ENCODE measurements at regions of chr22 and their contacts with region 1.

Region 1: DNA sequence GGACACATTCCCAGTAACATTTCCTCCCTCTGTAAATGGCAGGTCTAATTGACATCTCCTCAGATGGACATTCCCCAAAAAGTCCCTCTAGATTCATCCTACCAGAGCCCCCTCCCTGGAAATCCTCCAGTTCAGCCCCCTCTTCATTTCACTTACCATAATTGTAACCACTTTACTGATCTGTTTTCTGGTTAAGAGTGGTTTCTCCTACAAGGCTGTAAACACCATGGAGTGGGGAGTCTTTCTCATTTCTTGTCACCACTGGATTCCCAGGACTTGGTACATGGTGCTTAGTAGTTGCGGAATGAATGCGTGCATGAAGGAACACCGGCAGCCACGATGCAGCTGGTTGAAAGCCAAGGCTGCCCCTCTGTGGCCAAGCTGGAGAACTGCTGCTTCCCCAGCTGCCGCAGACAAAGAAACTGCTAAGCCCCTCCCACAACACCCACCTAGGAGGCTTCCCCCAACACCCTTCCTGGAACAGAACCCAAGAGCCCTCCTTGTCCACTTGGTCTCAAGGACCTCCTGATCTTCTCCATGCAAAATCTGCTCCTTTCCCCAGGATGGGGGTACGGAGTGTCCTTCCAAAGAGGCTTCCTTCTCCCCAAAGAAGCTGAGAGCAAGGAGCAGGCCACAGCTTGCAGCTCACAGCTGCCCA is 18.6 kb upstream of the SCARF2 start:
- DNase-seq: peak; percentile 66
- H3K4me3 Mint-ChIP-seq: no peak overlapping the region
- H3K27ac Mint-ChIP-seq: peak overlapping the region; percentile 40
- H3K4me1 Mint-ChIP-seq: peaks cover 14% of the 10 kb centered on the region
- H3K27me3 Mint-ChIP-seq: peaks cover 3% of the 10 kb centered on the region

Region 2: DNA sequence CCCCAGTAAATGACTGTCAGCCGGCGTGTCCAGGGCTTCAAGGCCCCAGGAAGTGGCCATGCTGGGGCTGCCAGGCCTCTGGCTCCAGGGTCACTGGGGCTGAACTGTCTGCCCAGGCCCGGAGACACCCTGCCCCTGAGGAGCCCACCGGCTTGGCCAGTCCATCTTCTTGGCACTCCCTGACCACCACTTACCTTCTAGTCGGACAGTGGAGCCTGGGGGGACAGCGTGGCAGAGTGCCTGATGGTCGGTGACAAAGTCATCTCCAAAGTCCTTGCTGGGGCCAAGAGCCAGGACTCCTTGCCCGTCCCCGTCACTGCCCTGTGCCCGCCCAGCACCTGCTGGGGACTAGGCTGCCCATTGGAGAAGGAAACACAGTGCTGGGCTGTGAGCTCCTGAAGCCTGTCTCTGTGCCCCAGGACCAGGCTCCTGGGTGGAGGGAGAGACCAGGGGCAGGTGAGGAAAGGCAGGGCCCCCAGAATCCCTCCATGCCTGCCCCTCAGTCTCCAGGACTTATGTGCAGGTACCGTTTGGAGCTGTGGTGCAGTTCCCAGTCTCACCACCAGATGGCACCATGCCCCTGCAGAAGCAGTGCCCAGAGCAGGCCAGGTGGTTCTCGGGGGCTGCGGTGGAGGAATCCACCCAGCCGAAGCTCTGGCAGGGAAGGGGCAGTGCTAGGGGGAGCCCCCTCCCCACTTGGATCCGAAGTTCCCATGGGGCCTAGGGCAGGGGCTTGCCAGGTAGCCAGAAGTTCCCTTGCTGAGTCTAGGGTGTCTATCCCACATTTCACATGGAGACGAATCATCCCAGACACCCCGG is 299.4 kb before region 1 on chr22:
- intact Hi-C with region 1: loop called (anchors 1 kb)
- DNase-seq: peak; percentile 74
- H3K4me3 Mint-ChIP-seq: no peak overlapping the region
- H3K27ac Mint-ChIP-seq: no peak overlapping the region
- H3K4me1 Mint-ChIP-seq: no peaks in the 10 kb centered on the region
- H3K27me3 Mint-ChIP-seq: peaks cover 4% of the 10 kb centered on the region

Region 3: DNA sequence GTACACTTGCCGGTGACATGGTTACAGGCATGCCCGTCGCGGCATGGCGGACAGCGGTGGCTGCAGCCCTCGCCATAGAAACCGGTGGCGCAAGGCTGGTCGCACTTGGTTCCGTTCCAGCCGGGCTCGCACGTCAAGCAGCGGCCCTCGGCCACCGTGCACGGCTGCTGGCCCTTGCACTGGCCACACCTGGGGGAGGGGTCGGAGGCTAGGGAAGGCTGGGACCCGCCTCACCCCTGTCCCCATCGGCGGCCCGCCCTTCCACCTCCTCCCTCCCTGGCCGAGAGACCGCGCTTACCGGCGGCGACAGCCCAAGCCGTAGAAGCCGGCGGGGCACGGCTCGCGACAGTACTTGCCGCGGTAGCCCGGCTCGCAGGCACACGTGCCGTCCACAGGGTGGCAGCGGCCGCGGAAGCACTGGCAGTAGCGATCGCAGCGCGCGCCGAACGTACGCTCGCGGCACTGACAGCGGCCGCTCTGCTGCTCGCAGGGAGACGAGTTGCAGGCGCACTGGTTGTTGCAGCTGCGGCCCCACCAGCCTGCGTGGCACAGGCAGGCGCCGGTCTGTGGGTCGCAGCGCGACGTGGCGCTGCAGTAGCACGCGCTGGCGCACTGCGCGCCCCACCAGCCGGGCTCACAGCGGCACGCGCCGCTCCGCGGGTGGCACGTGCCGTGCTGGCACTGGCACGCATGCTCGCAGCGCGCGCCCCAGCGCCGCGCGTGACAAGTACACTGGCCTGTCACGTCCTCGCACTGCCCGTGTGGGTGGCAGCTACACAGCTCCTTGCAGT is 25.3 kb before region 1 on chr22:
- intact Hi-C with region 1: loop called (anchors 1 kb)
- DNase-seq: peak; percentile 29
- H3K4me3 Mint-ChIP-seq: peak overlapping the region; percentile 42
- H3K27ac Mint-ChIP-seq: no peak overlapping the region
- H3K4me1 Mint-ChIP-seq: peaks cover 6% of the 10 kb centered on the region
- H3K27me3 Mint-ChIP-seq: peaks cover 60% of the 10 kb centered on the region

Region 4: DNA sequence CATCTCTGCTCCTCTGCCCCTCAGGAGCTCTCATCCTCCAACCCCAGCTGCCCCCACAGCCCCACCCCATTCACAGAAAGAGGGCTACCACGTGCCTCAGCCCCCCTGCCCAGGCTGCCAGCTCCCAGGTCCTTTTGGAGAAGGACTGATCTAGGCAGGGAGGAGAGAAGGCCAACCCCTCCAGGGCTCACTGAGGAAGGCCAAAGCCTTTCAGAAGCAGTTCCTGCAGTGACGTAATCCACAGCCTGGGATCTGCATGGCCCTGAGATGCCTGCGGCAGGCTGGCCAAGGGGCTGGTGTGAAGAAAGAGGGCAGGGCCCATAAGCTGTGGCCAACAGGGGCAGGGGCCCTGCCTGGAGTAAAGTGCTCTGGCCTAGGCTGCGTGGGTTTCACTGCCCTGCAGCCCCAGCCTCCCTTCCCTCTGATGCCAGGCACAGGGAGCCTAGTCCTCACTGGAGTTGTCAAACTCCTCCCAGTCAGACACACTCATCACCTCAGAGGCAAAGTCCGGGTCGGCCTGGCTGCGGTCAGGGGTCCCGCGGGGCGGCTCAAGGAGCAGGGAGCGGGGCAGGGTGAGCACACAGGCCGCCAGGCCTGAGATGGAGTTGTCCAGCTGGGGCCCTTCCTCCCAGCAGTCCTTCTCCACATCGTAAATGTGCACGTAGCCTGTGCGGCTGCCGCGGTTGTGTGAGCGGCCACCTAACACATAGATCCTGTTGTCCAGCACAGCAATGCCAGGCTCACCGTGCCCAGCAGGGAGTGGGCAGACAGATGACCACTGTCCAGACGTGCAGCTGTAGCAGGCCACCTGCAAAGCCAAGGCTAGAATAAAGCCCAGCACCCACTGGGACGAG is 14.3 kb before region 1 on chr22:
- intact Hi-C with region 1: no loop called
- DNase-seq: no peak
- H3K4me3 Mint-ChIP-seq: no peak overlapping the region
- H3K27ac Mint-ChIP-seq: no peak overlapping the region
- H3K4me1 Mint-ChIP-seq: peaks cover 4% of the 10 kb centered on the region
- H3K27me3 Mint-ChIP-seq: peaks cover 21% of the 10 kb centered on the region

Region 5: DNA sequence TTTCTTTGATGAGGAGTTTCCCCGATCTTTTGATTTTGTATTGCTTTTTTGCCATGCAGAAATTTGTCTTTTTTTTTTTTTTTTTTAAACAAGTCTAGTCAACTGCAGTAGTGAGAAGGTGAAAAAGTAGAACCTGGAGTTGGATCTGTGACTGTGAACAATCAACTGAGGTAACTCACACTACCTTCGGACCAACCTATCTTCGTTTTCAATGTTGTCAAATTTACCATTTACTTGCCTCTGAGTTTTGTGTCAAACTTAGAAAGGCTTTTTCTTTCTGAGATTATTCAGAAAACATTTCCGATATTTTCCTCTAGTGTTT is 18.9 kb after region 1 on chr22:
- intact Hi-C with region 1: loop called (anchors 1 kb)
- DNase-seq: no peak
- H3K4me3 Mint-ChIP-seq: peak overlapping the region; percentile 2
- H3K27ac Mint-ChIP-seq: peak overlapping the region; percentile 48
- H3K4me1 Mint-ChIP-seq: peaks cover 11% of the 10 kb centered on the region
- H3K27me3 Mint-ChIP-seq: no peaks in the 10 kb centered on the region

Region 6: GRCh38 chr22:20507253-20508066 is 51.3 kb after region 1 on chr22 and contains the start of gene MED15:
- intact Hi-C with region 1: no loop called
- DNase-seq: peak; percentile 88
- H3K4me3 Mint-ChIP-seq: peak within 1 kb of the TSS; percentile 95
- H3K27ac Mint-ChIP-seq: peak within 1 kb of the TSS; percentile 96
- H3K4me1 Mint-ChIP-seq: peaks cover 50% of the 10 kb centered on the region
- H3K27me3 Mint-ChIP-seq: no peaks in the 10 kb centered on the region
- total RNA-seq, gene MED15: 103 and 110 TPM in 2 replicates

Region 7: DNA sequence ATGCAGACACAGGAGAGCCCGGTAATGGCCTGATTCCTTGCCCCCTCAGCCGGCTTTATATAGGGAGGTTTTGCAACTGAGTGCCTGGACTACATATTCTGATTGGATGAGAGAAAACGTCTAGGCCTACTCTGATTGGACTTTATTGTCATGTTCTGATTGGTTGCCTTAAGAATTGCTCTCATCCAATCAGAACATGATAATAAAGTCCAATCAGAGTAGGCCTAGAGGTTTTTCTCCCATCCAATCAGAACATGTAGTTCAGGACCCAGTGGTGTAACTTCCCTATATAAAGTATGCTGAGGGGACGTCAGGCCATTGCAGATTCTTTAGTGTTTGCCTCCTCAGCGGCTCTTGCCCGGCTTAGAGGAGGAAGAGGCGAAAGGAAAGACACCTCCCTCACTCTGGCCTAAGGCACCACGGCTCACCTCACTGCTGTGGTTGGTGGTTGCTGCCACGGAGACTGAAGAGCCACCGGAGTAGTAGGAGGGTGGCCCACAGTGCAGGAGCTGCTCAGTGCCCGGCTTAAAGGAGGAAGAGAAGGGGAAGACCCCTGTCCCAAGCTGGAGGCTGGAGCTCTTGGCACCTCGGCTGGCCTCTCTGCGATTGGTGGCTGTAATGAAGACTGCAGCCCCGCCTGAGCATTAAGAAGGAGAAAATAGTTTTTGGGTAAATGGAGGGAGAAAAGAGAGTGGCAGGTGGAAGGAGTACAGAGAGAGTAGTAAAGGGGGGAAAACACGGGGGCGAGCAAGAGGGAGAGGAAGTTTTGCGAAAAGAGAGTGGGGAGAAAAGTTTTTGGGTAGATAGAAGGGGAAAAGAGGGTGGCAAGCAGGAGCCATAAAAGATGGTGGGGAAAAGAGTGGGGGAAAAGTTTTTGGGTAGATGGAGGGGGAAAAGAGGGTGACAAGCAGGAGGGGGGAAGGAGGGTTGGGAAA is 201.0 kb after region 1 on chr22:
- intact Hi-C with region 1: no loop called
- DNase-seq: no peak
- H3K4me3 Mint-ChIP-seq: no peak overlapping the region
- H3K27ac Mint-ChIP-seq: no peak overlapping the region
- H3K4me1 Mint-ChIP-seq: no peaks in the 10 kb centered on the region
- H3K27me3 Mint-ChIP-seq: peaks cover 36% of the 10 kb centered on the region

Measured in activated T-helper 1 cell treated with anti-CD3 and anti-CD28 coated beads, Interleukin-12 subunit alpha, Interleukin-12 subunit beta, Interleukin-2, Interleukin-4 antibody, amounts not matched to agents 30 ng/mL and 10 ng/mL and 1 ng/mL, durations not matched to agents 14 hours and 24 hours and 36 hours (primary cell).